Activated T-helper 1 cell treated with anti-CD3 and anti-CD28 coated beads, Interleukin-12 subunit alpha, Interleukin-12 subunit beta, Interleukin-2, Interleukin-4 antibody, amounts not matched to agents 30 ng/mL and 10 ng/mL and 1 ng/mL, durations not matched to agents 14 hours and 24 hours and 36 hours (primary cell): ENCODE measurements at regions of chr1 and their contacts with region 1.

Region 1: DNA sequence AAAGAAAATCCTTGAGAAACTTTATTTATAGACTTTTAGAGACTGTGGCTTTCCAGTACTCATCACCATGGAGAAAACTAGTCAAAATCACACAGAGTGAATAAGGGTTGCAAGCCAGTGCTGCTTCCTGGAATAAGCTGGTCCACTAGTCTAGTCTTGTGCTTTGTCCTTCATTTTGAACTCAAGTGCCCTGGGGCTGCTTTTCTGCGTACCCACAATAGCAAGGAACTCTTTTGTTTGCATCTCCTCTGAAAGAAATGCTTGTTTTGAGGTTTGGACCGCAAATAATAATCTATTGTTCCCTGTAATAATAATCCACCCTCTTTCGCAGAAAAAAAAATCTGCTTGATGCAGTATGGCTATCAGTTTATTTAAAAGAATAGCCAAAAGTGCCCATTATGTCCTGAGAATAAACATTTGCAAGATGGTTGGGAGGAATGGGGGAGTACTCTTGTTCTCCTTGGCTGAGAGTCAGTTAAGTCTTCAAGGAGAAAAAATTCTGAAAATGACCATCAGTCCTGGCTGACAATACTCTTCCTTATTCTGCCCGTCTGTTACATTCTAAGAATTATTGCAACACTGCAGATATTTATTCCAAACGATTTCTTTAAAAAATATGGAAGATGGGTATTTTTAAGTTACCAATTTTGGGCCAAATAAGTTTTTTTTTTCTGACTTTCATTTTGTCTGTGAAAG is 41.9 kb downstream of the MPZL1 start:
- DNase-seq: no peak
- H3K4me3 Mint-ChIP-seq: no peak overlapping the region
- H3K27ac Mint-ChIP-seq: no peak overlapping the region
- H3K4me1 Mint-ChIP-seq: peaks cover 45% of the 10 kb centered on the region
- H3K27me3 Mint-ChIP-seq: no peaks in the 10 kb centered on the region

Region 2: GRCh38 chr1:167721617-167722151 is 42.0 kb before region 1 on chr1 and contains the start of gene MPZL1:
- intact Hi-C with region 1: loop called (anchors 2 kb)
- DNase-seq: peak; percentile 92
- H3K4me3 Mint-ChIP-seq: peak within 1 kb of the TSS; percentile 95
- H3K27ac Mint-ChIP-seq: peak within 1 kb of the TSS; percentile 83
- H3K4me1 Mint-ChIP-seq: peaks cover 77% of the 10 kb centered on the region
- H3K27me3 Mint-ChIP-seq: no peaks in the 10 kb centered on the region
- total RNA-seq, gene MPZL1: 40.8 and 40.9 TPM in 2 replicates

Region 3: GRCh38 chr1:167776151-167776550 is 12.5 kb after region 1 on chr1:
- intact Hi-C with region 1: loop called (anchors 1 kb)
- DNase-seq: no peak
- H3K4me3 Mint-ChIP-seq: peak overlapping the region; percentile 23
- H3K27ac Mint-ChIP-seq: peak overlapping the region; percentile 38
- H3K4me1 Mint-ChIP-seq: peaks cover 46% of the 10 kb centered on the region
- H3K27me3 Mint-ChIP-seq: no peaks in the 10 kb centered on the region

Region 4: GRCh38 chr1:167981933-167982332 is 218.3 kb after region 1 on chr1:
- intact Hi-C with region 1: no loop called
- DNase-seq: no peak
- H3K4me3 Mint-ChIP-seq: no peak overlapping the region
- H3K27ac Mint-ChIP-seq: no peak overlapping the region
- H3K4me1 Mint-ChIP-seq: peaks cover 14% of the 10 kb centered on the region
- H3K27me3 Mint-ChIP-seq: no peaks in the 10 kb centered on the region